Vagina (tissue), 2 donors: ENCODE measurements at regions of chr12 and their contacts with region 1.

Region 1: DNA sequence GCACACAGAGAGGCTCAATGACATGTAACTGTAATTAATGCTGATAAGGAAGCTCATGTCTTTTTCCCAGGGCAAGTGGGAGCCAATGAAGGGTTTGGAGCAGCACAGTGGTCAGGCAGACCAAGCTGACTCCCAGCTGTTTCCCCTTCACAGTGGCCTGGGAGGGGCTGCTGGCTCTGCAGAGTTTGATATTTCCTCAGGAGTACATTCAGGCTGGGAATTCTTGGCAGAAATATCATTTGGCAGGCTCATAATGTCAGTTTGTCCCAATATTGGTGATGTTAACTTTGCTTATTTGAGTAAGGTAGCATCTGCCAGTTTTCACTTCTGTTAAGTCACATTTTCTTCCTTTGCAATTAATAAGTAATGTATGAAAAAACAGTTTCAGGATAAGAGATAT is 247.0 kb downstream of the EMP1 start:
- DNase-seq: peak in 1 of 2 donors; percentile 52
- H3K4me3 ChIP-seq: no peak overlapping the region
- H3K27ac ChIP-seq: peak overlapping the region; percentile 2
- H3K4me1 ChIP-seq: peaks cover 7% of the 10 kb centered on the region
- H3K27me3 ChIP-seq: no peaks in the 10 kb centered on the region
- CTCF ChIP-seq: no peak
- POLR2A ChIP-seq: no peak

Region 2: GRCh38 chr12:12654691-12655460 is 788.6 kb before region 1 on chr12:
- intact Hi-C with region 1: loop called (anchors 10 kb)
- DNase-seq: no peak
- H3K4me3 ChIP-seq: no peak overlapping the region
- H3K27ac ChIP-seq: no peak overlapping the region
- H3K4me1 ChIP-seq: no peaks in the 10 kb centered on the region
- H3K27me3 ChIP-seq: no peaks in the 10 kb centered on the region
- CTCF ChIP-seq: no peak
- POLR2A ChIP-seq: no peak

Region 3: GRCh38 chr12:13487326-13487725 is 43.8 kb after region 1 on chr12:
- intact Hi-C with region 1: no loop called
- DNase-seq: no peak
- H3K4me3 ChIP-seq: no peak overlapping the region
- H3K27ac ChIP-seq: no peak overlapping the region
- H3K4me1 ChIP-seq: no peaks in the 10 kb centered on the region
- H3K27me3 ChIP-seq: no peaks in the 10 kb centered on the region
- CTCF ChIP-seq: no peak
- POLR2A ChIP-seq: no peak

Region 4: GRCh38 chr12:13504074-13504473 is 60.6 kb after region 1 on chr12:
- intact Hi-C with region 1: no loop called
- DNase-seq: no peak
- H3K4me3 ChIP-seq: no peak overlapping the region
- H3K27ac ChIP-seq: no peak overlapping the region
- H3K4me1 ChIP-seq: no peaks in the 10 kb centered on the region
- H3K27me3 ChIP-seq: no peaks in the 10 kb centered on the region
- CTCF ChIP-seq: no peak
- POLR2A ChIP-seq: no peak